ENCODE measurements at regions of chr19 and their contacts with region 1.

Region 1: GRCh38 chr19:48468775-48469288 is 337 bp upstream of the CYTH2 start:
- DNase-seq: peak; percentile 99
- ATAC-seq: peak; percentile 93
- H3K4me3 Mint-ChIP-seq: peak overlapping the region; percentile 86
- H3K27ac Mint-ChIP-seq: peak overlapping the region; percentile 85
- H3K4me1 Mint-ChIP-seq: peaks cover 23% of the 10 kb centered on the region
- H3K27me3 Mint-ChIP-seq: no peaks in the 10 kb centered on the region

Region 2: DNA sequence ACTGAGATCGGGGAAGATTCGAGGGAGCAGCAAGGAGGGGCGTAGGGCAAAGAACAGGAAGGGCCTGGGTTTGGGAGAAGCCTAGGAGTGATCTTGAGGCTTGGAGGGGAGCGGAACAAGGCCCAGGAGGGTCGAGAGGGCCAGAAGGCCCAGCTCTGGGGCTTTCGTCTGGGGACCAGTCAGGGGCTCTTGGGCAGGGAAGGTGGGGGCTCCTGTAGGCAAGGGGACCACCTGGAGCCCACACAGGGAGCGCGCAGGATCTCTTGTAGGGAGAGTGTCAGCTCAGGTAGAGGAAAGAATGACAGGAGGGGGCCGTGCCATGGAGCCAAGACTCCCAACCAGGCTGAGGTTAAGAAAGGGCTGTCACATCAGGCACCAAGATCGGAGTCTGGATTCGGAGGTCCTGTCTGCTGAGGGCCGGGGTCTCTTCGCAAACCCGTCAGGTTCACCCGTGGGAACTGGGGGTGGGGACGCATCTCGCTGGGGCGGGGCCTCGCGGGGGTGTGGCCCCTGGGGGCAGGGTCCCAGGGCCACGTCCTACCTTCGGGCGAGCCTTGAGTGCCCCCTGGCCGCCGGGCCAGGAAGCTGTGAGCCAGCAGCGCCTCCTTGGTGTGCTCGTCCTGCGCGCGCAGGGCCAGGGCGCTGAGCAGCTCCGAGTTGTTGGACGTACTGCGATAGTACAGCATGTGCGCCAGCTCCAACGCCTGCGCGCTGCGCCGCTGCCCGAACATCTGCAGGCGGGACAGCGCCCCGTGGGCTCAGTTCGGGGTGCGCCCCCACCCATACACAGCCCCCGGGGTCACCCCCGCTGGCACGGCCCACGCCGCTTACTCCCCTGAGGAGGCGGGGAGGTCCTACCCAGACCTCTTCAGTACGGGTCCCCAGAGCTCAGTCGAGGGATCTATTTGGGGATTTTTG is 135.1 kb before region 1 on chr19:
- CTCF ChIA-PET with region 1: no interaction called
- POLR2A ChIA-PET with region 1: no interaction called
- intact Hi-C with region 1: loop called in 1 of 2 experiments (anchors 1 kb)
- DNase-seq: peak; percentile 97
- ATAC-seq: peak; percentile 72
- H3K4me3 Mint-ChIP-seq: peak overlapping the region; percentile 97
- H3K27ac Mint-ChIP-seq: peak overlapping the region; percentile 98
- H3K4me1 Mint-ChIP-seq: peaks cover 49% of the 10 kb centered on the region
- H3K27me3 Mint-ChIP-seq: no peaks in the 10 kb centered on the region

Region 3: DNA sequence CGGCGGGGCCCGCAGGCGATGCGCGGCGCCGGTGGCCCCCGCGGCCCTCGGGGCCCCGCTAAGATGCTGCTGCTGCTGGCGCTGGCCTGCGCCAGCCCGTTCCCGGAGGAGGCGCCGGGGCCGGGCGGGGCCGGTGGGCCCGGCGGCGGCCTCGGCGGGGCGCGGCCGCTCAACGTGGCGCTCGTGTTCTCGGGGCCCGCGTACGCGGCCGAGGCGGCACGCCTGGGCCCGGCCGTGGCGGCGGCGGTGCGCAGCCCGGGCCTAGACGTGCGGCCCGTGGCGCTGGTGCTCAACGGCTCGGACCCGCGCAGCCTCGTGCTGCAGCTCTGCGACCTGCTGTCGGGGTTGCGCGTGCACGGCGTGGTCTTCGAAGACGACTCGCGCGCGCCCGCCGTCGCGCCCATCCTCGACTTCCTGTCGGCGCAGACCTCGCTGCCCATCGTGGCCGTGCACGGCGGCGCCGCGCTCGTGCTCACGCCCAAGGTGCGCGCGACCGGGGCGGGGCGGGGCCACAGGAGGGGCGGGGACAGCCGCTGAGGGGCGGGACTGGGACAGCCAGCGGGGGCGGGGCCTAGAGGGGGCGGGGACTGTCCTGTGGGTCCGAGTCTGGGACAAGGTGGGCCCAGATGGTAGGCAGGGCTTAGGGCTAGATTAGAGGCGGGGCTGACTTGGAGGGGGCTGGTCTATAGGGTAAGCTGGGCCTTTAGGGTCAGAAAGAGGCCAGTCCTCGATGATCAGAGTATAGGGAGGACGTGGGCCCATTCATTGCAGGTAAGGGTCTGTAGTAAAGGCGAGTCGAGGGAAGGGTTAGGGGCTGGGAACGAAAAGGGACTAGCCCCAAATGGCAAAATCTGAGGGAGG is 70.2 kb before region 1 on chr19:
- CTCF ChIA-PET with region 1: no interaction called
- POLR2A ChIA-PET with region 1: no interaction called
- intact Hi-C with region 1: loop called in 1 of 2 experiments (anchors 1 kb)
- DNase-seq: peak; percentile 94
- ATAC-seq: peak; percentile 68
- H3K4me3 Mint-ChIP-seq: peak overlapping the region; percentile 83
- H3K27ac Mint-ChIP-seq: no peak overlapping the region
- H3K4me1 Mint-ChIP-seq: peaks cover 29% of the 10 kb centered on the region
- H3K27me3 Mint-ChIP-seq: peaks cover 31% of the 10 kb centered on the region

Region 4: GRCh38 chr19:48480558-48481500 is 12.0 kb after region 1 on chr19:
- CTCF ChIA-PET with region 1: no interaction called
- POLR2A ChIA-PET with region 1: no interaction called
- intact Hi-C with region 1: loop called in 1 of 2 experiments (anchors 1 kb)
- DNase-seq: peak; percentile 77
- ATAC-seq: peak; percentile 80
- H3K4me3 Mint-ChIP-seq: peak overlapping the region; percentile 76
- H3K27ac Mint-ChIP-seq: peak overlapping the region; percentile 86
- H3K4me1 Mint-ChIP-seq: peaks cover 11% of the 10 kb centered on the region
- H3K27me3 Mint-ChIP-seq: no peaks in the 10 kb centered on the region

Region 5: DNA sequence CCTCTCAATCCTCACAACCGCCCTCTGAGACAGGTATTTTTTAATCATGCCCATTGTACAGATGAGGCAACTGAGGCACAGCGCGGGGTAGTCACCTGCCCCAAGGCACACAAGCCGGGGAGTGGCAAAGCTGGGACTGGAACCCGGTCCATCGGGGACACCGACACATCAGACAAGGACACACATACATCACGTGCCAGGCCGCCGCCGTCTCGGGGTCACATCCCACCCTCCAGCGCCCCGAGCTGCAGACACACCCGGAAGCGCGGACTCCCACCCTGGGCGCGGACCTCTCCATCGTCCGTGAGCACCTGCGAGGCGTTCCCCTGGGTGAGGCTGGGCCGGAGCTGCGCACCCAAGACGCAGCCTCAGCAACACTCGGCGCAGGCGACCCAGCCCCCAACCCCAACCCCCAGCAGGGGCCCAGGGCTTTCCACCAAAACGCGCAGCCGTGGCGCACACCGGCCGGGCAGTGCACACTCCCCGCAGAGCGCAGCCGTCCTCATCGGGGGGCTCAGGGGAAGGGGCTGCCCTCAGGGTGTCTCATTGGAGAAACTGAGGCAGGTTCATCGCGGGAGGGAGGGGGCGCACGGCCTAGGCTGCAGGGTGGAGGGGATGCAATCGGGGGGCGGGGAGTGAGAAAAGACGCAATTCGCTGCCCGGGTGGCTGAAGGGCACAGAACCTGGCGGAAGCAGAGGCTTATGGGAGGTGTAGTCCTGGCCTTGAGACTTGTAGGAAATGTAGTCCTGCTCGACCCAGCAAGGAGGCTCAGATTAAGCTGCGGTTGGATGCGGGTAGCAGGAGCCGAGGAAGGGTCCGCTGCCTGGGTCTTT is 44.7 kb after region 1 on chr19:
- CTCF ChIA-PET with region 1: no interaction called
- POLR2A ChIA-PET with region 1: no interaction called
- intact Hi-C with region 1: loop called in 1 of 2 experiments (anchors 1 kb)
- DNase-seq: peak; percentile 86
- ATAC-seq: peak; percentile 81
- H3K4me3 Mint-ChIP-seq: no peak overlapping the region
- H3K27ac Mint-ChIP-seq: peak overlapping the region; percentile 30
- H3K4me1 Mint-ChIP-seq: peaks cover 8% of the 10 kb centered on the region
- H3K27me3 Mint-ChIP-seq: no peaks in the 10 kb centered on the region

Region 6: GRCh38 chr19:48530066-48530720 is 61.4 kb after region 1 on chr19:
- CTCF ChIA-PET with region 1: no interaction called
- POLR2A ChIA-PET with region 1: no interaction called
- intact Hi-C with region 1: no loop called
- DNase-seq: no peak
- ATAC-seq: no peak
- H3K4me3 Mint-ChIP-seq: no peak overlapping the region
- H3K27ac Mint-ChIP-seq: no peak overlapping the region
- H3K4me1 Mint-ChIP-seq: no peaks in the 10 kb centered on the region
- H3K27me3 Mint-ChIP-seq: peaks cover 4% of the 10 kb centered on the region

Region 7: GRCh38 chr19:48637170-48637947 is 168.5 kb after region 1 on chr19 and contains the start of gene DBP:
- CTCF ChIA-PET with region 1: no interaction called
- POLR2A ChIA-PET with region 1: no interaction called
- intact Hi-C with region 1: loop called in 1 of 2 experiments (anchors 1 kb)
- DNase-seq: peak; percentile 98
- ATAC-seq: peak; percentile 75
- H3K4me3 Mint-ChIP-seq: peak within 1 kb of the TSS; percentile 83
- H3K27ac Mint-ChIP-seq: peak within 1 kb of the TSS; percentile 99
- H3K4me1 Mint-ChIP-seq: peaks cover 55% of the 10 kb centered on the region
- H3K27me3 Mint-ChIP-seq: no peaks in the 10 kb centered on the region
- total RNA-seq, gene DBP: 8.3 to 12.4 TPM

Region 8: GRCh38 chr19:49127674-49128544 is 659.1 kb after region 1 on chr19:
- CTCF ChIA-PET with region 1: no interaction called
- POLR2A ChIA-PET with region 1: no interaction called
- intact Hi-C with region 1: loop called in 1 of 2 experiments (anchors 1 kb)
- DNase-seq: peak; percentile 98
- ATAC-seq: peak; percentile 95
- H3K4me3 Mint-ChIP-seq: peak overlapping the region; percentile 76
- H3K27ac Mint-ChIP-seq: peak overlapping the region; percentile 92
- H3K4me1 Mint-ChIP-seq: peaks cover 11% of the 10 kb centered on the region
- H3K27me3 Mint-ChIP-seq: no peaks in the 10 kb centered on the region